ENCODE measurements at regions of chr1 and their contacts with region 1.

Region 1: GRCh38 chr1:23184212-23184934 is 15.7 kb upstream of the LUZP1 start:
- DNase-seq: peak; percentile 24
- ATAC-seq: peak; percentile 37
- H3K4me3 Mint-ChIP-seq: peak overlapping the region; percentile 72
- H3K27ac Mint-ChIP-seq: no peak overlapping the region
- H3K4me1 Mint-ChIP-seq: peaks cover 4% of the 10 kb centered on the region
- H3K27me3 Mint-ChIP-seq: peaks cover 5% of the 10 kb centered on the region
- CTCF ChIP-seq: no peak

Region 2: DNA sequence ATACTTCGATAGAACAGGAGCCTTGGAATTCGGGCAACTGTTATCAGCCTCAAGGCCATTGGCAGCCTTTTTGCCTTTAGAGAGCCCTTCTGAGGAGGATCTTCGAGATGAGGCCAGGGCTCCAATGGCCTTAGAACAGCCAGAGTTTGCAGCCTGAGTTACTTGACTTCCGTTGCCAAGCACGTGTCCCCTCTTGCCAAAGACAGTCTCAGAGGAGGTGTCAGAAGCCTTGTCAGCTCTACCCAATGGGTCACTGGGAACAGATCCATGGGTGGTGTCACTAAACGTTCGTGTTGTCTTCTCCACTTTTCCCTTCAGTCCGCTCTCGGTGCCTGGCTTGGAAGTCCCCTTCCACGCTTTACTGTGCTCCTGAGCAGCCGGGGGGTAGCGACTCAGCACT is 91.9 kb before region 1 on chr1:
- CTCF ChIA-PET with region 1: interaction called, 407 read pairs
- POLR2A ChIA-PET with region 1: no interaction called
- intact Hi-C with region 1: no loop called
- DNase-seq: no peak
- ATAC-seq: no peak
- H3K4me3 Mint-ChIP-seq: no peak overlapping the region
- H3K27ac Mint-ChIP-seq: no peak overlapping the region
- H3K4me1 Mint-ChIP-seq: no peaks in the 10 kb centered on the region
- H3K27me3 Mint-ChIP-seq: no peaks in the 10 kb centered on the region
- CTCF ChIP-seq: no peak

Region 3: GRCh38 chr1:23114424-23115079 is 69.8 kb before region 1 on chr1:
- CTCF ChIA-PET with region 1: interaction called, 39 read pairs
- POLR2A ChIA-PET with region 1: no interaction called
- intact Hi-C with region 1: no loop called
- DNase-seq: no peak
- ATAC-seq: no peak
- H3K4me3 Mint-ChIP-seq: no peak overlapping the region
- H3K27ac Mint-ChIP-seq: peak overlapping the region; percentile 72
- H3K4me1 Mint-ChIP-seq: peaks cover 58% of the 10 kb centered on the region
- H3K27me3 Mint-ChIP-seq: no peaks in the 10 kb centered on the region
- CTCF ChIP-seq: no peak

Region 4: GRCh38 chr1:23163395-23163794 is 21.0 kb before region 1 on chr1:
- CTCF ChIA-PET with region 1: interaction called, 11 read pairs
- POLR2A ChIA-PET with region 1: interaction called, 25 read pairs
- intact Hi-C with region 1: loop called (anchors 1 kb)
- DNase-seq: no peak
- ATAC-seq: no peak
- H3K4me3 Mint-ChIP-seq: no peak overlapping the region
- H3K27ac Mint-ChIP-seq: no peak overlapping the region
- H3K4me1 Mint-ChIP-seq: peaks cover 8% of the 10 kb centered on the region
- H3K27me3 Mint-ChIP-seq: no peaks in the 10 kb centered on the region
- CTCF ChIP-seq: no peak

Region 5: GRCh38 chr1:23196639-23197328 is 12.4 kb after region 1 on chr1:
- CTCF ChIA-PET with region 1: interaction called, 15 read pairs
- POLR2A ChIA-PET with region 1: no interaction called
- intact Hi-C with region 1: no loop called
- DNase-seq: no peak
- ATAC-seq: no peak
- H3K4me3 Mint-ChIP-seq: no peak overlapping the region
- H3K27ac Mint-ChIP-seq: no peak overlapping the region
- H3K4me1 Mint-ChIP-seq: no peaks in the 10 kb centered on the region
- H3K27me3 Mint-ChIP-seq: peaks cover 14% of the 10 kb centered on the region
- CTCF ChIP-seq: no peak